OCI-LY7 (cell line): ENCODE measurements at regions of chr15 and their contacts with region 1.

Region 1: DNA sequence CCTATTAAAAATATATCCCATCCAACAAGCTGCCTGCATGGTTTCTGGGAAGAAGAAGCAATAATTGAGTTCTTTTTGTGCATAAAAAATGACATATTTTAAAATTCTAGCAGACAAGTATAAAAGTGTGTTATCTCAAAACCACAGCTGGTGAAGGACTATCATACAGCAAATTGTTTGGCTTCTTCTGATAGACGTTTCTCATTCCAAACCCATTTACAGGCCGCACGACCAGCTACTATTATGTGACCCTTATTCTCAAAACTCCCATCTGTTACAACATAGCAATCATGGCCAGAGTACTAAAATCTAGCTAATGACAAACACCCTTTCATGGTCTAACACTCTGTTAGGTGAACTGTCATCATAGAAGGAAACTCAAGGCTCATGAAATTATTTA is 21.7 kb downstream of the ETFA start:
- DNase-seq: no peak
- H3K4me3 ChIP-seq: no peak overlapping the region
- H3K27ac ChIP-seq: no peak overlapping the region
- H3K4me1 ChIP-seq: peaks cover 3% of the 10 kb centered on the region
- CTCF ChIP-seq: no peak

Region 2: GRCh38 chr15:76311100-76311953 is 21.7 kb after region 1 on chr15 and contains the start of gene ETFA:
- CTCF ChIA-PET with region 1: interaction called, 3 read pairs
- POLR2A ChIA-PET with region 1: interaction called, 16 read pairs
- intact Hi-C with region 1: no loop called
- DNase-seq: peak; percentile 99
- H3K4me3 ChIP-seq: peak within 1 kb of the TSS; percentile 80
- H3K27ac ChIP-seq: peak within 1 kb of the TSS; percentile 27
- H3K4me1 ChIP-seq: peaks cover 13% of the 10 kb centered on the region
- CTCF ChIP-seq: no peak
- total RNA-seq, gene ETFA: 84.8 and 99.4 TPM in 2 replicates